Activated CD8-positive, alpha-beta memory T cell treated with anti-CD3 and anti-CD28 coated beads, Interleukin-2, amount 10 ng/mL, durations not matched to agents 7 days and 5 days (primary cell): ENCODE measurements at regions of chr12 and their contacts with region 1.

Region 1: DNA sequence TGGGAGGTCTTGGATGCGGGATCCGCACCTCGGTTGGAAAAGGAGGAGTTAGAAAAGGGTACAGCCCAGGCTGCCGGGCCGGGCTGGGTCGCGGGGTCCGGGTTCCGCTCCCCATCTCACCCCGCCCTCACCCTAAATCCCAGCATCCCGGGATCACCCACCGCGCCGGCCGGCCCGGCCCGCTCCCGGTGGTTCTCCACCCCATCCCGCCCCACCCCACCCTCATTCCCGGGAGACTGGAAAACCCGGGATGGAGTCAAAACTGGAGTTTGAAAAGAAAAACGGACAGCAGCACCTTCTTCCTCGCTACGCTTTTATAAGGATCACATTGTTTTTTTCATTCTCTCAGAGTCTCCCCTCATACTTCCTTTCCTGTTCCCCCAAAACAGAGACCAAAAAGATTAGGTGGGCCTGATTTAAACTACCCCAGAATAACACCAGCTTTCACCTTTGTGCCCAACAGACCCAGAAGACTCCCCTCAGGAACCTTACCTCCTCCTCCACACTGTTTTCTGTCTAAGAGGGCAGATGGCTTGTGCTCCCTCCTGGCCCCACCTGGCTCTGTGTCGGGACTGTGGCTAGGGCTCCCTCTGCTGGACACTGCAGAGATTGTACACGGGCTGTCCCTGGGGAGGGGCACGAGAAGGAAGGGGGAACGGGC is 2.8 kb downstream of the GLI1 start:
- DNase-seq: peak; percentile 94
- ATAC-seq: peak; percentile 80
- H3K4me3 Mint-ChIP-seq: peak overlapping the region; percentile 82
- H3K27ac Mint-ChIP-seq: peak overlapping the region; percentile 58
- H3K4me1 Mint-ChIP-seq: peaks cover 46% of the 10 kb centered on the region
- H3K27me3 Mint-ChIP-seq: peaks cover 18% of the 10 kb centered on the region

Region 2: DNA sequence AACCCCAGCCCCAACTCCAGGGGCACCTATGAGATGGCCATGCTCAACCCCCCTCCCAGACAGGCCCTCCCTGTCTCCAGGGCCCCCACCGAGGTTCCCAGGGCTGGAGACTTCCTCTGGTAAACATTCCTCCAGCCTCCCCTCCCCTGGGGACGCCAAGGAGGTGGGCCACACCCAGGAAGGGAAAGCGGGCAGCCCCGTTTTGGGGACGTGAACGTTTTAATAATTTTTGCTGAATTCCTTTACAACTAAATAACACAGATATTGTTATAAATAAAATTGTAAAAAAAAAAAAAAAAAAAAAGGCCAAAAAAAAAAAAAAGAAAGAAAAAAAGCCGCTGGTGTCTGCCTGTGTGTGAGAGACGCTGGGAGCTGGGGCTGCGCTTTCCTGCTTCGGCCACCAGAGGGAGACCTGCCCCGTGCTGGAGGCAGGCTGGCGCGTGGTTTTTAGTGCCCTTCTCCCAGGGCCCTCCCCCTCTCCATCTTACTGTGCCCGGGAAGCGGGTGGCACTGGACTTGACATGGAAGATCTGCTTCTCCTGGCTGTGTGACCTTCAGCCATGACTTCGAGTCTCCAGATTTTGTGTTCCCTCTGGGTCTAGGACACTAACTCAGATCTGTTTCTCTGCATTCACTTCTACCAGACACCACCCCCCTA is 249.2 kb before region 1 on chr12:
- CTCF ChIA-PET with region 1: interaction called, 14 read pairs
- DNase-seq: peak; percentile 89
- ATAC-seq: peak; percentile 57
- H3K4me3 Mint-ChIP-seq: no peak overlapping the region
- H3K27ac Mint-ChIP-seq: no peak overlapping the region
- H3K4me1 Mint-ChIP-seq: peaks cover 30% of the 10 kb centered on the region
- H3K27me3 Mint-ChIP-seq: peaks cover 41% of the 10 kb centered on the region

Region 3: DNA sequence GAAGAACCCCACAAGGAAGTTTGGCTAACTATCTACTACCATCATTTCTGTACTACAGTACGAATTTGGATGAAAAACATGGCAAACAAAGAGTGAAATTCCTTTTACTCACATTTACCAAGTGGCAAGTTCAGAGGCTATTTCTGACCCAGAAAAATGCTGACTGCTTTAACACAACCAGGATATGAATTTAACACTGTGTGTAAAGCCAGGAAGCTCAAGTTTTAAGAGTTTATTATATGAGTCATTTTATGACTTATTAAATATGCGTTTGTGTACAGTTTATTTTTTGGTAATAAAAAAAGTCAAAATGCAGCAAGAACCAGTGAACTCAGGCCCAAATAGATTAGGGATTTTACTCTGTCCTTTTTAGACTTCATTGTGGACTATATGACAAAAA is 153.0 kb before region 1 on chr12:
- CTCF ChIA-PET with region 1: interaction called, 43 read pairs
- DNase-seq: no peak
- ATAC-seq: peak; percentile 36
- H3K4me3 Mint-ChIP-seq: no peak overlapping the region
- H3K27ac Mint-ChIP-seq: peak overlapping the region; percentile 14
- H3K4me1 Mint-ChIP-seq: peaks cover 13% of the 10 kb centered on the region
- H3K27me3 Mint-ChIP-seq: no peaks in the 10 kb centered on the region

Region 4: DNA sequence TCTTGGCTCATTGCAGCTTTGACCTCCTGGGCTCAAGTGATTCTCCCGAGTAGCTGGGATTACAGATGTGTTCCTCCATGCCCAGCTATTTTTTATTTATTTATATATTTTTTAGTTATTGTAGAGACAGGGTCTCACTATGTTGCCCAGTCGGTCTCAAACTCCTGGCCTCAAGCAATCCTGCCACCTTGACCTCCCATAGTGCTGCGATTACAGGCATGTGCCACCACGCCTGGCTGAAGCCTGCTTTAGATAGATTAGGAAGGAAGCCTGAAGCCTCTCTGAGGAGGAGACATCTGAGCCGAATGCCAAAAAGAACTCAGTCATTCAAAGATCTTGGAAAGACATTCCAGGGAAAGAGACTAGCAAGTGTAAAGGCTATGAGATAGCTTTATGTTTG is 17.6 kb before region 1 on chr12:
- CTCF ChIA-PET with region 1: interaction called, 27 read pairs
- DNase-seq: no peak
- ATAC-seq: no peak
- H3K4me3 Mint-ChIP-seq: no peak overlapping the region
- H3K27ac Mint-ChIP-seq: no peak overlapping the region
- H3K4me1 Mint-ChIP-seq: peaks cover 2% of the 10 kb centered on the region
- H3K27me3 Mint-ChIP-seq: peaks cover 7% of the 10 kb centered on the region

Region 5: GRCh38 chr12:57496822-57497221 is 34.4 kb after region 1 on chr12:
- CTCF ChIA-PET with region 1: no interaction called
- DNase-seq: no peak
- ATAC-seq: no peak
- H3K4me3 Mint-ChIP-seq: no peak overlapping the region
- H3K27ac Mint-ChIP-seq: no peak overlapping the region
- H3K4me1 Mint-ChIP-seq: peaks cover 9% of the 10 kb centered on the region
- H3K27me3 Mint-ChIP-seq: no peaks in the 10 kb centered on the region

Region 6: GRCh38 chr12:57583008-57583831 is 120.8 kb after region 1 on chr12:
- CTCF ChIA-PET with region 1: interaction called, 13 read pairs
- DNase-seq: peak; percentile 82
- ATAC-seq: peak; percentile 99
- H3K4me3 Mint-ChIP-seq: no peak overlapping the region
- H3K27ac Mint-ChIP-seq: no peak overlapping the region
- H3K4me1 Mint-ChIP-seq: peaks cover 4% of the 10 kb centered on the region
- H3K27me3 Mint-ChIP-seq: no peaks in the 10 kb centered on the region

Region 7: GRCh38 chr12:57744777-57745484 is 282.6 kb after region 1 on chr12 and contains the start of gene TSPAN31:
- CTCF ChIA-PET with region 1: interaction called, 10 read pairs
- DNase-seq: peak; percentile 98
- ATAC-seq: peak; percentile 83
- H3K4me3 Mint-ChIP-seq: peak within 1 kb of the TSS; percentile 85
- H3K27ac Mint-ChIP-seq: peak within 1 kb of the TSS; percentile 95
- H3K4me1 Mint-ChIP-seq: peaks cover 49% of the 10 kb centered on the region
- H3K27me3 Mint-ChIP-seq: no peaks in the 10 kb centered on the region
- total RNA-seq, gene TSPAN31: 10.0 to 19.4 TPM